ENCODE measurements at regions of chr20 and their contacts with region 1.

Region 1: DNA sequence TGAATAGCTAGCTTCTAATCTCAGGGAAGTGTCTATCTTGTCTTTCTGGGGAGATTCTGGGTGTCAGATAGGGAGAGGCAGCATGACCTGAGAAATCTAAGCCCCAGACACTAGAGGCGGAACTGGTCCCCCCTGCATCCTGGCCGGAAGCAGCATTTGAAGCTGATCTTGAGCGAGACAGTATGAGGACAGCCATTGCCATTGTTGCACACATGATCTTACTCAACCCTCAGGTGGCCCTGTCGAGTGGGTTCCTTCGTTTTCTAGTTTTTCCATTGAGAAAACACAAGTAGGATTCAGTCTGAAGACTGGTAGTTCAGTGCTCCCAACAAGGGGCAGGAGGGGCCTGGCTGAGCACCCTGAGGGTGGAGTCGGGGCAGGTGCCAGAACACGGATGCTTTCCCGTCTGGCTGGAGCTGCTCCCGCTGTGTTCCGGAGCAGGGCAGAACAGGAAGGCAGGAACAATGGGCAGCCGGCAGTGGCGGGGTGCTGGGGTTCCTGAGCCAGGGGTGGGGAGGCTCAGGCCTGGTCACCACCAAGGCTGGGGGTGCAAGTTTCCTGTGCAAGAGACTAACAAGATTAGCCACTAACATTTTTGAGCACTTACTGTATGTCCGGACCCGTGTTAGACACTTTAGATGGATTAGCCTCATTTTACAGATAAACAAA is 7.9 kb upstream of the SDCBP2 start:
- DNase-seq: peak; percentile 87 to 93 (median 93)
- ATAC-seq: peak; percentile 92 to 97
- H3K4me3 ChIP-seq: no peak overlapping the region
- H3K27ac ChIP-seq: peak overlapping the region; percentile 66
- H3K4me1 ChIP-seq: peaks cover 15% of the 10 kb centered on the region
- H3K27me3 ChIP-seq: no peaks in the 10 kb centered on the region

Region 2: DNA sequence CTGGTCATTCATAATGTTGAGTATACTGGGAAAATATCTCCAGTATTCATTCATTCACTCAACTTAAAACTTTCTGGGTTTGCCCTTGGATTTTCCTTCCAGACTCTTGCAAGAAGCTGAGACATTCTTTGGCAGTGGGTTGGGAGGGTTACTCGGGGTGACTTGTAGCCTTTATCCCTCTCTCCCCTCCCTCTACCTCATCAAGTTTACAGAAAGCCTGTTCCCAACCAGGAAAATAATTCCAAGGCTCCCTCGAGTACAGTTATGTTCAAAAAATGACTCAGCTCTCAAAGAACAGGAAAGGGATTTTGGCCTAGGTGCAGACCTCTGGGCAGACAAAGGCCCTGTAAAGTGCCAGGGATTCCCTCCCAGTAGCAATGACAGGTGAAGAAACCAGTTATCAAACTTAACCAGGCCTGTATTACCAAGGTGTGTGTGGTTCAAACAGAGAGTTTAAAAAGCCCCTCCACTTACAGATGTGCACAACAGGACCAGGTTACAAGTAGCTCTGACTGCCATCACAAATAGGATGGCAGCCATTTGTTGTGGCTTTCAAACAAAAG is 33.8 kb after region 1 on chr20:
- intact Hi-C with region 1: loop called in 1 of 4 experiments (anchors 5 kb)
- DNase-seq: no peak
- ATAC-seq: peak; percentile 60 to 70
- H3K4me3 ChIP-seq: no peak overlapping the region
- H3K27ac ChIP-seq: peak overlapping the region; percentile 90
- H3K4me1 ChIP-seq: peaks cover 20% of the 10 kb centered on the region
- H3K27me3 ChIP-seq: no peaks in the 10 kb centered on the region

Region 3: DNA sequence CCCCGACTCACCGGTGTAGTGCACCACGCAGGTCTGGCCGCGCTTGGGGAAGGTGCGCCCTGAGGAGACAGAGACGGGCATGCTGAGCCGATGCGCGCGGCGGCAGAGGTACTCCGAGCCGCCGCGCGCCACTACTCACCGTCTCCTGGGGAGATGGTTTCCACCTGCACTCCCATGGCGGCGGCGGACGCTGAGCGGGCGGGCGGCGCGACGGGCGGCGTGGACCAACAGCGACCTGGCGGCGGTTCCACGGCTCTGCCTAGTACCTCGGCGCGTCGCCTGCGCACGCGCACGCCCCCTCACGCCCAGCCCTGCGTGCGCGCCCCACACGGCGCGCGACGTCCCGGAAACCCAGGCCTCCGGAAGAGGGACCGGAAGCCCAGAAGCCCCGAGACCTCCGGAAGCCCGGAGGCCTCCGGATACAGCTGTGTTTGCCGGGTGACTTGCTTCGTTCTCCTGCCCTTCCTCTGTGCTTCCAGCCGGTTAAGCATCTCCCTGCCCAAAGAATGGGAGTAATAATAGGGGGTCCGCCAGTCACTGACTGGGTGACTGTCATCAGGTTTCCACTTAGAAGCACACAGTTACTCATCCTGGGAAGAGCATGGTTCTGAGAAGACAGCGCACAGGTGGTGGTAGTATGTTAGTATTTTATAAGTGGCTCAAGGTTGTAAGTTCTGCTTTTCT is 56.1 kb after region 1 on chr20 and contains the start of gene FKBP1A:
- intact Hi-C with region 1: no loop called
- DNase-seq: peak; percentile 94 to 97 (median 97)
- ATAC-seq: peak; percentile 95 to 98
- H3K4me3 ChIP-seq: peak within 1 kb of the TSS; percentile 96
- H3K27ac ChIP-seq: peak within 1 kb of the TSS; percentile 60
- H3K4me1 ChIP-seq: peaks cover 19% of the 10 kb centered on the region
- H3K27me3 ChIP-seq: no peaks in the 10 kb centered on the region
- total RNA-seq, gene FKBP1A: 105 to 162 (median 140) TPM

Region 4: DNA sequence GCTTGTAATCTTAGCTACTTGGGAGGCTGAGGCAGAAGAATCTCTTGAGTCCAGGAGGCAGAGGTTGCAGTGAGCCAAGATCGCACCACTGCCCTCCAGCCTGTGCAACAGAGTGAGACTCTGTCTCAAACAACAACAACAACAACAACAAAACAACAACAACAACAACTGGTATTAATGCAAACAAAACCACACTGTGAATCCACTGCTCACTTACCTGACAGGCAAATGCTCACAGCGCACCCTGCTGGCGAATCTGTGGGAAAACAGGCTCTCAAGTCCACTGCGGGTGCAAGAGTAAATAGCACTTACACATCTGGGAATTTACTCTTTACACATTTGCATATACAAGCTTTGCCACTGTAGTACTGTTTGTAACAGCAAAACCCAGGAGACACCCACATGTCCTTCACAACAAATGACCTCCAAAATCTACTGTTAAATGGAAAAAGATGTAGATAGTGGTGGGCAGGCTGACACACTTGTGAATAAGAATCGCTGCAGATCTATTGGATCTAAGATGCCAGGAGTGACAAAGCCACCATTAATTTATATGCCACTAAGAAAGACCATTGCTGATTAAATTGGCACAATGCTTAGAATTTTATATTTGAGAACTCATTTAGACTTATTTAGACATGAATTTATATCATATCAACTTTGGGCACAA is 100.5 kb after region 1 on chr20:
- intact Hi-C with region 1: no loop called
- DNase-seq: peak; percentile 67 to 87 (median 82)
- ATAC-seq: peak; percentile 53 to 70
- H3K4me3 ChIP-seq: no peak overlapping the region
- H3K27ac ChIP-seq: no peak overlapping the region
- H3K4me1 ChIP-seq: no peaks in the 10 kb centered on the region
- H3K27me3 ChIP-seq: no peaks in the 10 kb centered on the region